ENCODE measurements at regions of chr10 and their contacts with region 1.

Region 1: GRCh38 chr10:63166742-63167258 is 33.7 kb downstream of the NRBF2 start:
- DNase-seq: no peak
- H3K4me3 ChIP-seq: no peak overlapping the region
- H3K27ac ChIP-seq: no peak overlapping the region
- H3K4me1 ChIP-seq: no peaks in the 10 kb centered on the region
- H3K27me3 ChIP-seq: no peaks in the 10 kb centered on the region
- CTCF ChIP-seq: peak; percentile 69 to 83 (median 82)
- POLR2A ChIP-seq: no peak

Region 2: DNA sequence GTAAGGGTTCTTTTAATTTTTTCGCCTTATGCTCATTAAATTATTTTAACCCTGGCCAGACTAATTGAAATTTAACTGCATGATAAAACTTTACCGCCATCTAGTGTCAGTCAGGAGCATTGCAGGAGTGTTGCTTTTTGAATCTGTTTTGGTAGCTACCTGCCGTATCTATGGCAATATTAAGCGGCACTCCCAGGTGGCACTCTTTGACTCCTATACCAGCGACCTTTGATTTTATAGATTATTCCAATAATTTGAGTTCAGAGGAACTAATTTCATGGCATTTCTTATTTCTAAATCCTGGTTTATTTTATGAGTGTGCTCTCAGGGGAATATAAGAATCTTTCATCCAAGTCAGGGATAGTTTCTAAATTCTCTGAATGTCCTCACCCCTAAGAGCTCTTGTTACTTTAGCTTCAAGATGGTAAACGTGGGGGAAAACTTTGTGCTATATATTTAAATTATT is 553.3 kb after region 1 on chr10:
- intact Hi-C with region 1: loop called (anchors 10 kb)
- DNase-seq: peak; percentile 65
- H3K4me3 ChIP-seq: no peak overlapping the region
- H3K27ac ChIP-seq: no peak overlapping the region
- H3K4me1 ChIP-seq: peaks cover 3% of the 10 kb centered on the region
- H3K27me3 ChIP-seq: no peaks in the 10 kb centered on the region
- CTCF ChIP-seq: peak; percentile 82 to 94 (median 86)
- POLR2A ChIP-seq: no peak